Activated CD4-positive, alpha-beta T cell treated with anti-CD3 and anti-CD28 coated beads, Interleukin-2, amount 10 ng/mL, durations not matched to agents 24 days and 14 days (primary cell): ENCODE measurements at regions of chr10 and their contacts with region 1.

Region 1: GRCh38 chr10:119305860-119306513 is 98.6 kb downstream of the GRK5 start:
- DNase-seq: peak; percentile 95
- H3K4me3 Mint-ChIP-seq: peak overlapping the region; percentile 81
- H3K27ac Mint-ChIP-seq: peak overlapping the region; percentile 100
- H3K4me1 Mint-ChIP-seq: peaks cover 79% of the 10 kb centered on the region
- H3K27me3 Mint-ChIP-seq: peaks cover 2% of the 10 kb centered on the region

Region 2: DNA sequence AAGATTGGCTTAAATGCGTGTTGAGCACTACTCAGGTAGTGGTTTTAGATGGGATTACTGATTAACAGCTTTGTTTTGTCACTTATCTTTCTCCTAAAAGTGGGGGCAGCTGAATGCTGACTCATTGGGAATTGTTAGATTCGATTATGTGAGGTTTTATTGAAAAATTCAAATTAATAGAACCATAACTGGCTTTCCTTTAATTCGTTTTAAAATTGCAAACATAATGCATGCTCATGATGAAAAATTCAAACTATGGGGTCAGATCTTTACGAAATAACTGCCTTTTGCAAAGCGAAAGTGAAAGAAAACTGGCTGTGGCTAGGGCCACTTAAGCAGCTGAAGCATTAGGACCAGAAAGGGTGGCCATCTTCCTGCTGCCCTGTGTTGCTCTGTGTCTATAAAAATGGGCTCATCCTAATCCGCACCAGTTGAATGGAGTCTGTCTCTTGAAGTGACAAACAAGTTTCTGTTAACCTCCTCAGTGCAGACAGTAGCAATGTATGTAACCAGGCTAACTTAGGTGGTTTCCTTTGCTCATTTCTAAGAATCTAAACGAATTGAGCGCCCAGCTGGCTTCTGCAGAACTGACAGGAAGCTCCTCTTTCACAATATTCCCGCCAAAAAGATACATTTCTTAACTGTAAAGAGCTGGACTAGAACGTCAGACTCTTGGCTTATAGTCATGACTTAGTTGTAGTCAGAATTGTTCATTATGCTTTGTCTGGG is 174.3 kb before region 1 on chr10:
- intact Hi-C with region 1: loop called (anchors 2 kb)
- DNase-seq: peak; percentile 89
- H3K4me3 Mint-ChIP-seq: peak overlapping the region; percentile 83
- H3K27ac Mint-ChIP-seq: peak overlapping the region; percentile 95
- H3K4me1 Mint-ChIP-seq: peaks cover 52% of the 10 kb centered on the region
- H3K27me3 Mint-ChIP-seq: no peaks in the 10 kb centered on the region

Region 3: DNA sequence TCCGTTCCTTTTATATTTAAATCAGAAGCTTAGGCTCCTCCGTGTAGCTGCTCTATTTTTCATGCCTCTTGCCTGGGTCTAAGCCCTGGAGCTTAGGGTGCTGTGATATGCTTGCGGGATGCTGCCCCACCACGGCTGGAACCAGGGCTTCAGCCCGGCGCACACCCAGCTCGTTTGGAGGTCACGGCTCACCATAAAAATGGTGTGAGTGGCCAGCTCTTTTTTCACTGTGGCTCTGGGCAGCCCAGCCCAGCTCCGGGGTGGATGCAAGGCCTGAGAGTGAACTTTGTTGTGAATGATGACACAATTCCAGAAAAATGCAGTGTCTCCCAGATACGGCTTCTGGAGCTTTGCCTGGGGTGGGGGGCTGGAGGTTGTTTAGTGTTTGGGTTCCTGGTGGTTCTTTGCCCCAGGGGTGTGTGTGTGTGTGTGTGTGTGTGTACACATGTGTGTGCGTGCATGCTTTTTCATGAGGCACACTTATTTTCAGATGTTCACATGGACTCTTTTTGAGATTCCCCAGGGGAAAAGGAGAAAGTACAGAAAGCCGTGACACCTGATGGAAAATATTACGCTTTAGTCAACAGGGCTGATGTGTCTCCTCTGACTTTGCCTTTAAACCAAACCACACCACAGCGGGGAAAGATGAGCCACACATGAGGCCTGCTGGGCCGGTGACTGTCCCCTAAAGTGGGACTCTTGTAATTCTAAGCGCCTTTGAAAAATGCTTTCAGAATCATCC is 52.4 kb before region 1 on chr10:
- intact Hi-C with region 1: loop called (anchors 1 kb)
- DNase-seq: peak; percentile 74
- H3K4me3 Mint-ChIP-seq: peak overlapping the region; percentile 24
- H3K27ac Mint-ChIP-seq: peak overlapping the region; percentile 92
- H3K4me1 Mint-ChIP-seq: peaks cover 44% of the 10 kb centered on the region
- H3K27me3 Mint-ChIP-seq: no peaks in the 10 kb centered on the region

Region 4: DNA sequence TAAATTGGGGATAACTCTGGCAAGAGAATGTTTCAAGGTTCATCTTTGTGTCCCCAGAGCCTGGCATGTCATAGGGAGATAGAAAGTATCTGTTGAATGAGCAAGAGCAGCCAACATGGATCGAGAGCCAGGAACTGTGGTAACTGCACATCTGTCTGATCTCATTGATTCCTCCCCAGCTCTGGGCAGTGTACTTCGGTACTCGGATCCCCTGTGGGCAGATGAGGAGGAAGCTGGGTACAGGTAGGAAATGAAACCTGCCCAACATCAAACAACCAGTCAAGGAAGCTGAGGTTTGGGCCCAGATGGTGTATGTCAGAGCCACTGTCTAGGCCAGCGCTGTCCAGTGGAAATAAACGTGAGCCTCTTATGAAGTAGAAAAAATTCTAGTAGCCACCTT is 22.2 kb before region 1 on chr10:
- intact Hi-C with region 1: loop called (anchors 2 kb)
- DNase-seq: peak; percentile 81
- H3K4me3 Mint-ChIP-seq: peak overlapping the region; percentile 71
- H3K27ac Mint-ChIP-seq: peak overlapping the region; percentile 80
- H3K4me1 Mint-ChIP-seq: peaks cover 66% of the 10 kb centered on the region
- H3K27me3 Mint-ChIP-seq: no peaks in the 10 kb centered on the region

Region 5: GRCh38 chr10:119333146-119333792 is 27.3 kb after region 1 on chr10:
- intact Hi-C with region 1: loop called (anchors 1 kb)
- DNase-seq: peak; percentile 75
- H3K4me3 Mint-ChIP-seq: no peak overlapping the region
- H3K27ac Mint-ChIP-seq: peak overlapping the region; percentile 57
- H3K4me1 Mint-ChIP-seq: peaks cover 18% of the 10 kb centered on the region
- H3K27me3 Mint-ChIP-seq: no peaks in the 10 kb centered on the region

Region 6: GRCh38 chr10:119502209-119502608 is 196.2 kb after region 1 on chr10:
- intact Hi-C with region 1: loop called (anchors 5 kb)
- DNase-seq: peak; percentile 93
- H3K4me3 Mint-ChIP-seq: peak overlapping the region; percentile 72
- H3K27ac Mint-ChIP-seq: peak overlapping the region; percentile 97
- H3K4me1 Mint-ChIP-seq: peaks cover 73% of the 10 kb centered on the region
- H3K27me3 Mint-ChIP-seq: no peaks in the 10 kb centered on the region

Region 7: DNA sequence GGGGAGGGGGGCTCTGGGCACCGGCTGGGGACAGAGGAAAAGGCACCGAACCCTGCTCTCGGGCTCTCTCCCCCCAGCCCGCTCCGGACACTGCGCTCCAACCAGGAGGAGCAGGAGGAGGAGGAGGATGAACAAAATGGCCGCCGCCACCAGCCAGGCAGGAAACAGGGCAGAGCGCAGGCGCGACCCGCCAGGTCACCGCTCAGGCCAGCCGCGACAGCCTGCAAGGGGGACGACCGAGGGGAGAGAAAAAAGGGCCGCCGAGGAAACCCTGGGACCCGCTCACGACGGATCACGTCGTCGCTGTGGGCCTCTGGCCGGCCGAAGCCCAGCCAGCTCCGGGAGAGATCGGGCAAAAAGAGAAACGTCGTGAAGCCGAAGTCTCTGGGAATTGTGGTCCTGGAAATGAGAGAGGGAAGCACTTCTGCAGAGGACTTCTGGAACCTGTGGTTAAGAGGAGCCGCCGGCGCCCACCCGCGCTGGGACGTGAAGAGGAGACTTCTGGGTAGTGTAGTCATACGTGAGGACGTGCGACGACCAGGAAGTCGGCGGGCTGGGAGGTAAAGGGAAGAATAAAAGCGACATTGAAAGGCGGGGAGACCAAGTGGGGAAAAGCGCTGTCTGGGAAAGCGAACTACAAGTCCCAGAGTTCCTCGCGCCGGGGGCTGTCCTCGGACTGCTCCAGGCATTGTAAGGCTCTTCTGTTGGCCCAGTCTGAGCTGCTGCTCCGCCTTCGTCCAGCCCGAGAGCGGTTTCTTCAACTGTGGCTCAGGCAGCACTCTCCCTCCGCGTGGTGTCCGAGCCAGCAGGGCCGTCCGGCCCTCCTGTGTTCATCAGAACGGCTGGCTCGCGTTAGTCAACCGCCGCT is 290.8 kb after region 1 on chr10 and contains the start of gene TIAL1:
- intact Hi-C with region 1: loop called (anchors 5 kb)
- DNase-seq: peak; percentile 97
- H3K4me3 Mint-ChIP-seq: peak within 1 kb of the TSS; percentile 90
- H3K27ac Mint-ChIP-seq: peak within 1 kb of the TSS; percentile 94
- H3K4me1 Mint-ChIP-seq: peaks cover 45% of the 10 kb centered on the region
- H3K27me3 Mint-ChIP-seq: no peaks in the 10 kb centered on the region
- total RNA-seq, gene TIAL1: 212 and 218 TPM in 2 replicates